ENCODE measurements at regions of chr15 and their contacts with region 1.

Region 1: DNA sequence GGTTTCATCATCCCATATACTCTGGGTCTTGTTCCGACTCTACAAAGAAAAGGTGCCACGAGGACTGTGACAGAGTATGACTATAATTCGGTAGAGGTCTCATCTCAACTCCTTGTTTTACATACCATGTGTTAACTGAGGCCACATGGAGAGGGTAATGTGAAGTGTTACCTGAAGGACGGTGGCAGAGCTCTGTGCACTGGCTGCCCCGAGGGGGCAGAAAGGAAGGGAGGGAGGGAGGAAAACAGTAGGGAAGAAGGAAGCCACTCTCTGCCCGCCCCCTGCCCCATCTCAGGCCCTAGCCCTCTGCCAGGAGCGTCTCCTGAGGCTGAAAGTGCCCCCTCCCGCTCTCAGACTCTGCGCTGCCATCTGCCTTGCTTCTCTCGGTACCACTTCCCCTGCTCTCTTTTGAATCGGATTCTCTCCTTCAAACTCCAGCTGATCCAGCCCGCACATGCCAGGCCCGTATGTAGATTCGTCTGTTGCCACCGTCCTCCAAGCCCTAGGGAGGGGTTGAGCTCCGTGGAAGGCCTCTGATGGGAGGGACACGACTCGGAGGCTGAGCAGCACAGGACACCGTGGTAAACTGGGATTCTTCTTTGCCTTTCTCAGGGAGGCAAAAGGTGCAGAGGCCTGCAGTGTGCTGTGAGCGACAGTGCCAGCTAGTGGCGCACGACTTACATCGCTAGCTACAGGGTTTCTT is 70.5 kb upstream of the ATP10A start:
- DNase-seq: peak; percentile 70 to 84
- H3K4me3 ChIP-seq: no peak overlapping the region
- H3K4me3 Mint-ChIP-seq: peak overlapping the region; percentile 61
- H3K27ac Mint-ChIP-seq: peak overlapping the region; percentile 51
- H3K4me1 ChIP-seq: peaks cover 5% of the 10 kb centered on the region; the same call in 1 of the 2 replicates
- H3K4me1 Mint-ChIP-seq: peaks cover 11% of the 10 kb centered on the region
- H3K27me3 ChIP-seq: no peaks in the 10 kb centered on the region
- H3K27me3 Mint-ChIP-seq: peaks cover 3% of the 10 kb centered on the region
- CTCF ChIP-seq: peak; percentile 77 to 91

Region 2: GRCh38 chr15:25508369-25509002 is 425.1 kb before region 1 on chr15:
- CTCF ChIA-PET with region 1: interaction called, 27 read pairs
- POLR2A ChIA-PET with region 1: no interaction called
- intact Hi-C with region 1: loop called (anchors 1 kb)
- DNase-seq: peak in 1 of 2 experiments; percentile 25
- H3K4me3 ChIP-seq: no peak overlapping the region
- H3K4me3 Mint-ChIP-seq: no peak overlapping the region
- H3K27ac Mint-ChIP-seq: no peak overlapping the region
- H3K4me1 ChIP-seq: no peaks in the 10 kb centered on the region
- H3K4me1 Mint-ChIP-seq: no peaks in the 10 kb centered on the region
- H3K27me3 ChIP-seq: no peaks in the 10 kb centered on the region
- H3K27me3 Mint-ChIP-seq: peaks cover 5% of the 10 kb centered on the region
- CTCF ChIP-seq: peak; percentile 67 to 68

Region 3: GRCh38 chr15:25710184-25710583 is 223.4 kb before region 1 on chr15:
- CTCF ChIA-PET with region 1: interaction called, 20 read pairs
- POLR2A ChIA-PET with region 1: no interaction called
- intact Hi-C with region 1: no loop called
- DNase-seq: peak; percentile 64 to 78
- H3K4me3 ChIP-seq: no peak overlapping the region
- H3K4me3 Mint-ChIP-seq: no peak overlapping the region
- H3K27ac Mint-ChIP-seq: no peak overlapping the region
- H3K4me1 ChIP-seq: no peaks in the 10 kb centered on the region
- H3K4me1 Mint-ChIP-seq: no peaks in the 10 kb centered on the region
- H3K27me3 ChIP-seq: no peaks in the 10 kb centered on the region
- H3K27me3 Mint-ChIP-seq: no peaks in the 10 kb centered on the region
- CTCF ChIP-seq: peak; percentile 85 to 90

Region 4: GRCh38 chr15:25783607-25784540 is 149.7 kb before region 1 on chr15:
- CTCF ChIA-PET with region 1: interaction called, 14 read pairs
- POLR2A ChIA-PET with region 1: interaction called, 3 read pairs
- intact Hi-C with region 1: loop called (anchors 1 kb)
- DNase-seq: peak in 1 of 2 experiments; percentile 55
- H3K4me3 ChIP-seq: no peak overlapping the region
- H3K4me3 Mint-ChIP-seq: no peak overlapping the region
- H3K27ac Mint-ChIP-seq: no peak overlapping the region
- H3K4me1 ChIP-seq: peaks cover 6% of the 10 kb centered on the region; the same call in 1 of the 2 replicates
- H3K4me1 Mint-ChIP-seq: peaks cover 12% of the 10 kb centered on the region
- H3K27me3 ChIP-seq: no peaks in the 10 kb centered on the region
- H3K27me3 Mint-ChIP-seq: no peaks in the 10 kb centered on the region
- CTCF ChIP-seq: peak; percentile 15 to 39

Region 5: GRCh38 chr15:25883463-25884259 is 49.9 kb before region 1 on chr15:
- CTCF ChIA-PET with region 1: interaction called, 5 read pairs
- POLR2A ChIA-PET with region 1: no interaction called
- intact Hi-C with region 1: loop called (anchors 1 kb)
- DNase-seq: peak; percentile 59 to 76
- H3K4me3 ChIP-seq: no peak overlapping the region
- H3K4me3 Mint-ChIP-seq: peak overlapping the region; percentile 54
- H3K27ac Mint-ChIP-seq: peak overlapping the region; percentile 75
- H3K4me1 ChIP-seq: peaks cover 59% of the 10 kb centered on the region
- H3K4me1 Mint-ChIP-seq: peaks cover 48% of the 10 kb centered on the region
- H3K27me3 ChIP-seq: no peaks in the 10 kb centered on the region
- H3K27me3 Mint-ChIP-seq: no peaks in the 10 kb centered on the region
- CTCF ChIP-seq: no peak